Breast epithelium (tissue), 4 donors: ENCODE measurements at regions of chrX and their contacts with region 1.

Region 1: GRCh38 chrX:82029571-82030218 is 827.8 kb downstream of the SH3BGRL start:
- DNase-seq: no peak
- H3K4me3 ChIP-seq: no peak overlapping the region
- H3K27ac ChIP-seq: no peak overlapping the region
- H3K4me1 ChIP-seq: no peaks in the 10 kb centered on the region
- H3K27me3 ChIP-seq: no peaks in the 10 kb centered on the region
- CTCF ChIP-seq: no peak
- POLR2A ChIP-seq: no peak

Region 2: DNA sequence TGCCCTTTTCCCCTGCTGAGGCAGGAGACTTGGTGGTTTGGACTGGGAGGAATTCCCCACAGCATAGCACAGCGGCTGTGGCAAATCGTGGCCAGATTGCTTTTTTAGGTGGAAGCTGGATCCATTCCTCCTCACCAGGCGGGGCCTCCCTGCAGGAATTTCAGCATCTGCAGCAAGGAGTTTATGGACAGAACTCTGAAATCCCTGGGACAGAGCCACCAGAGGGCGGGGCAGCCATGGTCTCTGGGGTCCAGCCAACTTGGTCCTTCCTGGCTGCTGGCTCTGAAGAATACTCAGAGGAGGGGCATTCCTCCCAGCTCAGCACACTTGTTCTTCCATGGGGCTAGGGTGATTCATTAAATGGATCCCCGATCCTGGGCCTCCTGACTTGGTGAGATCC is 33.5 kb before region 1 on chrX:
- intact Hi-C with region 1: no loop called
- DNase-seq: no peak
- H3K4me3 ChIP-seq: no peak overlapping the region
- H3K27ac ChIP-seq: no peak overlapping the region
- H3K4me1 ChIP-seq: no peaks in the 10 kb centered on the region
- H3K27me3 ChIP-seq: no peaks in the 10 kb centered on the region
- CTCF ChIP-seq: no peak
- POLR2A ChIP-seq: no peak

Region 3: GRCh38 chrX:82041034-82041433 is 11.3 kb after region 1 on chrX:
- intact Hi-C with region 1: no loop called
- DNase-seq: no peak
- H3K4me3 ChIP-seq: no peak overlapping the region
- H3K27ac ChIP-seq: no peak overlapping the region
- H3K4me1 ChIP-seq: no peaks in the 10 kb centered on the region
- H3K27me3 ChIP-seq: peaks cover 0 to 10% of the 10 kb centered on the region in 2 donors
- CTCF ChIP-seq: no peak
- POLR2A ChIP-seq: no peak

Region 4: GRCh38 chrX:82058728-82059127 is 29.0 kb after region 1 on chrX:
- intact Hi-C with region 1: no loop called
- DNase-seq: no peak
- H3K4me3 ChIP-seq: no peak overlapping the region
- H3K27ac ChIP-seq: no peak overlapping the region
- H3K4me1 ChIP-seq: no peaks in the 10 kb centered on the region
- H3K27me3 ChIP-seq: peaks cover 0 to 8% of the 10 kb centered on the region in 2 donors
- CTCF ChIP-seq: no peak
- POLR2A ChIP-seq: no peak

Region 5: GRCh38 chrX:82627568-82627967 is 597.9 kb after region 1 on chrX:
- intact Hi-C with region 1: loop called (anchors 5 kb)
- DNase-seq: no peak
- H3K4me3 ChIP-seq: no peak overlapping the region
- H3K27ac ChIP-seq: no peak overlapping the region
- H3K4me1 ChIP-seq: no peaks in the 10 kb centered on the region
- H3K27me3 ChIP-seq: no peaks in the 10 kb centered on the region
- CTCF ChIP-seq: no peak
- POLR2A ChIP-seq: no peak